AG04450 (cell line): ENCODE measurements at regions of chr19 and their contacts with region 1.

Region 1: DNA sequence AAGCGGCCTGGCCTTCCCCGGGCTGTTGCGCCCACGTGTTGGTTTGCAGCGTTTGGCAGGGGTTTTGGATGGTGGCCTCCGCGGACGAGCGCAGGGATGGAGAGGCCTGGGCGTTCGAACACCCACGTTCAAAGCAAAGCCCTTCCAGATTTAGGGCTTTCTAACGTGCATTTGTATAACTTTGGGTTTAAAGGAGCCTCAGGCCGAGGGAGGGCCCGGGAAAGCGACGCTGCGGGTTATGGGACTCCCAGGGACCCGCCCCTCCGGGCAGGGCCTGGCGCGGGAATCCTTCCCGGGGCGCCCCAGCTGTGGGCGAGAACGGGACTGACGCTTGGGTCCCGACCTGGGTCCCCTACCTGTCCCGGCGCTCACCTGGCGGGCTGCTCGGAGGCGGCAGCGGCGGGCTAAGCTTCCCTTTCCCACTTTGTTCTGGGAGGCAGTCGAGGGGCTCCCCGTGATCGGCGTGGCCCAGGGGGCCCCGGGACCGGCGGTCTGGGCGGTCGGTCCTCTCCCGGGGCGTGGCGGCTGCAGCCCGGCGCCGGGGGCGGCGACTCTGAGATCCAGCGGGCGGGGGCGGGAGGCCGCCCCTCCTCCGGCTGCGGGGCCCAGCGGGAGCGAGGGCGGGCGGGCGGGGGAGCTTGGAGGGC is at the start of gene FBXO17:
- DNase-seq: no peak
- H3K4me3 ChIP-seq: peak within 1 kb of the TSS; percentile 74
- H3K27ac ChIP-seq: peak within 1 kb of the TSS; percentile 84
- H3K27me3 ChIP-seq: no peaks in the 10 kb centered on the region
- CTCF ChIP-seq: no peak
- polyA plus RNA-seq, gene FBXO17: 10.8 and 11.6 TPM in 2 replicates

Region 2: DNA sequence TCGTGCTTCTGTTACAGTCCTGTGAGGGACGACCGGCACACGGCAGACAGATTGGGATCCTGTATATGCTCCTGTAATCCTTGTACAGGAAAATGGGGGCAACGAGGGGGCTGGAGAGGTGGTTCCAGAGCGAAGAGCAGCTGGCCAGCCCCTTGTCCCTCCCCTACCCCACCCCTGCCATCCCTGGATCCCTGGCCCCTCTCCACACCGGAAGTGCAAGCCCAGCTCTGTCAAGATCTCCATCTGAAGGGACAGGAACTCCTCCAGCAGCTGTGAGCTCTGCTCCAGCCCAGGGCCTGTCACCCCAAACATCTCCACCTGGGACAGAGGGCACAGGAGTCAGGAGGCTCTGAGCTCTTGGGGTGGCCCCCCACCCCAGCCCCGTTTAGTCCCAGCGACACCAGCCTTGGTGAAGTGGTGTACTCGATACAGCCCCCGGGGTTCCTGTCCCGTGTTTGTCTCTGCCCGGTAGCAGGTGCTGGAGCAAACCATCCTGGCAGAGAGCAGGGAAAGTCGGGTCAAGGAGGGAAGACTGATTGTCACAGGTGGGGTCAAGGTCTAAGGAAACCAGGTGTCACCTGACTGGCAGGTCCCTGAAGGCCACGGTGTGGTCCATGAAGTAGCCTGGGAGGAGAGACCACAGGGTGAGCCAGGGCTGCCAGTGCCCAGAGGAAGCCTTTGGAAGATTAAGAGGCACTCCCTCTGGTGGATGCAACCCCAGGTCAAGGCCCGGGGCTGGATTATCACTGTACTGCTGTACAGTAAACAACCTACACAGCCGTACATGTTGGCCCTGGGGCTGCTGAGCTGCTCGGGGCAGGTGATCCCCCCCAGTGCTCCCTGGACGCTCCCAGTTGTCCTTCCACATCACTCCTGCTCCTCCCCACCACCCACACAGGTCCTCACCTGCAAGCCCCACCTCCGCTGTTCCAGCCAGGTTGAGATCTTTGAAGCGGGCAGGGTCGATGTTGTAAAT is 57.5 kb before region 1 on chr19:
- CTCF ChIA-PET with region 1: no interaction called
- POLR2A ChIA-PET with region 1: no interaction called
- DNase-seq: no peak
- H3K4me3 ChIP-seq: no peak overlapping the region
- H3K27ac ChIP-seq: no peak overlapping the region
- H3K27me3 ChIP-seq: no peaks in the 10 kb centered on the region
- CTCF ChIP-seq: 0 out of 2 replicates have a peak, but pooled peaks have one; percentile 16

Region 3: DNA sequence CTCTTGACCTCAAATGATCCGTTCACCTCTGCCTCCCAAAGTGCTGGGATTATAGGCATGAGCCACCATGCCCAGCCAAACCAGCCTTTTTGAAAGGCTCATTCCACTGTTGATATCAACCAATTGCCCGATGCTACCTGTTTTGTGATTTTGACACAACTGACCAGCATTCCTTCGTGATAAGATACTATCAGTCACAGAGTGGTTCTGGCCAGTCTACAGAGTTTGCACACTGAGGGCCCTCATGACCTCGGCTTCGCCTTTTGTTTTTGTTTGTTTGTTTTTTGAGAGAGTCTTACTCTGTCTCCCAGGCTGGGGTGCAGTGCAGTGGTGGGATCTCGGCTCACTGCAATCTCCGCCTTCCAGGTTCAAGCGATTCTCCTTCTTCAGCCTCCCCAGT is 19.3 kb after region 1 on chr19:
- CTCF ChIA-PET with region 1: interaction called, 10 read pairs
- POLR2A ChIA-PET with region 1: interaction called, 3 read pairs
- DNase-seq: no peak
- H3K4me3 ChIP-seq: no peak overlapping the region
- H3K27ac ChIP-seq: no peak overlapping the region
- H3K27me3 ChIP-seq: no peaks in the 10 kb centered on the region
- CTCF ChIP-seq: no peak